Right ventricle myocardium inferior (tissue), 1 donor: ENCODE measurements at regions of chr5 and their contacts with region 1.

Region 1: DNA sequence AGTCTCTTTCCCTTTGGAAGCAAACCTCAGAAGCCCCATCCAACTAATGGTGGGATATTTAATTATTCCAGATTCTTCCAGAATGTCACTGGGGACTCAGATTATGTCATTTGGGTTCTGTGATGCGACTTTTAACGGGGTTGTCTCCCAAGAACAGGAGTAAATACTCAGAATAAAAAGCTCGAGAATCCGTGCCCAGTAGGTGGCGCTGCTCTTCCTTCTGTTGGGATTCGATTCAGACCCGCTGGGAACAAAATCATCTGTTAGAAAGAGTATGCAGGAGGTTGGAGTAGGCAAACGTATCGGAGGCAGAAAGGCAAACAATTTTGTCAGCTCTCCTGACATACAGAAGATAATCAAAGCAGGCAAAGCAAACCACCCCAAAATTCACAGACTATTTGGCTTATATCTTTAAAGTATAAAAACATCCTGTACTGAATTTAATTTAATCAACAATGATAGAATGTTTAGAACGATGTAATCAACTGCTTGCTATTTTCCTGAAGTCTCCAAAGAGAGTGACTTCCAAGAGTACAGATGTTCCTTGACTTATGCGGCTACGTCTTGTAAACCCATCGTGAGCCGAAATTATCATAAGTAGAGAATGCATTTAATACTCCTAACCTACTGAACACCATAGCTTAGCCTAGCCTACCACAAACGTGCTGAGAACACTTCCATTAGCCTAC is 169.8 kb upstream of the RAI14 start:
- DNase-seq: peak; percentile 73
- ATAC-seq: peak; percentile 68

Region 2: GRCh38 chr5:34522599-34523386 is 36.5 kb after region 1 on chr5:
- intact Hi-C with region 1: loop called (anchors 2 kb)
- DNase-seq: no peak
- ATAC-seq: peak; percentile 76

Region 3: GRCh38 chr5:34898258-34898895 is 412.1 kb after region 1 on chr5:
- intact Hi-C with region 1: loop called (anchors 1 kb)
- DNase-seq: peak; percentile 64
- ATAC-seq: peak; percentile 80

Region 4: DNA sequence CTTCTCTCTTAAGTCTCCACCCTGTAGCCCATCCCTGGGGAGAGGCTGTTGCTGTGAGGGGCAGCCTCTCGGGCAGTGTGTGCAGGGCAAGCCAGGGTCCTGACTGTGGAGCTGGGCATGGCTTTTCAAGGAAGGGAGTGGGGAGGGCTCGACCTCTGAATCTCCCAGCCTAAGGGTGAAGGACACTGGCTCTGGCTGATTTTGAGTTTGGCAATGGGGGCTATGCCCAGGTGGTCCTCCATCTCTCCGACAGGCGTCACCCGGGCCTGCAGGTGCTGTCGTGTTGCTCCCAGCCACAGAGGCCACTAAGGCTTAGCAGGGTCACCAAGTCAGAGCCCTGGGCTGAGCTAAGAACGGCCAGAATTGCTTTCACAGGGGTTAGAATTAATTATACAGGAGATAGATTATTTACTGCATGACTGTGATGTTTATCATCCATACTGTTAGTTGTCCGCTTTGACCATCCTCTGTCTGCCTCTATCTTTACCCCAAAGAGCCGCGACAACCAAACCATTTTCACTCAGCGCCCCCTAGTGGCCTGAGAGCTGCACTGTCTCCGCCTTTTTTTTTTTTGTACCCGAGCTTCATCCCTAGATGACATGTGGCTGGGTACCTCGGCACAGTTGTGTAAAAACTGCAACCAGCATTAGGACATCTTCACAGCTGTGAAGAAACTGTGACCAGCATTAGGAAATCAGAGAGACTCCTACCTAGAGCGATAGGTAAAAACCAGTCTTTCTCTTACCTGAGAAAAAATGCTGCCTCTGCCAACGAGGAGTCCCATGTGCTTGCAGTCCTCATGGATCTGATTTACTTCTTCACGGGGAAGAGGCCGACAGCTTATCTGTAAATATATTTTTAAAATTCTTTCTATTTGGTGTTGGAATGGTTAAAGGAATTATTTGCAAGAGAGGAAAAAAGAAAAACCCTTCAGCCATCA is 517.0 kb after region 1 on chr5:
- intact Hi-C with region 1: loop called (anchors 10 kb)
- DNase-seq: no peak
- ATAC-seq: no peak

Region 5: GRCh38 chr5:35182541-35183535 is 696.5 kb after region 1 on chr5:
- intact Hi-C with region 1: loop called (anchors 5 kb)
- DNase-seq: no peak
- ATAC-seq: peak; percentile 42